Prostate gland (tissue), 2 donors: ENCODE measurements at regions of chr14 and their contacts with region 1.

Region 1: DNA sequence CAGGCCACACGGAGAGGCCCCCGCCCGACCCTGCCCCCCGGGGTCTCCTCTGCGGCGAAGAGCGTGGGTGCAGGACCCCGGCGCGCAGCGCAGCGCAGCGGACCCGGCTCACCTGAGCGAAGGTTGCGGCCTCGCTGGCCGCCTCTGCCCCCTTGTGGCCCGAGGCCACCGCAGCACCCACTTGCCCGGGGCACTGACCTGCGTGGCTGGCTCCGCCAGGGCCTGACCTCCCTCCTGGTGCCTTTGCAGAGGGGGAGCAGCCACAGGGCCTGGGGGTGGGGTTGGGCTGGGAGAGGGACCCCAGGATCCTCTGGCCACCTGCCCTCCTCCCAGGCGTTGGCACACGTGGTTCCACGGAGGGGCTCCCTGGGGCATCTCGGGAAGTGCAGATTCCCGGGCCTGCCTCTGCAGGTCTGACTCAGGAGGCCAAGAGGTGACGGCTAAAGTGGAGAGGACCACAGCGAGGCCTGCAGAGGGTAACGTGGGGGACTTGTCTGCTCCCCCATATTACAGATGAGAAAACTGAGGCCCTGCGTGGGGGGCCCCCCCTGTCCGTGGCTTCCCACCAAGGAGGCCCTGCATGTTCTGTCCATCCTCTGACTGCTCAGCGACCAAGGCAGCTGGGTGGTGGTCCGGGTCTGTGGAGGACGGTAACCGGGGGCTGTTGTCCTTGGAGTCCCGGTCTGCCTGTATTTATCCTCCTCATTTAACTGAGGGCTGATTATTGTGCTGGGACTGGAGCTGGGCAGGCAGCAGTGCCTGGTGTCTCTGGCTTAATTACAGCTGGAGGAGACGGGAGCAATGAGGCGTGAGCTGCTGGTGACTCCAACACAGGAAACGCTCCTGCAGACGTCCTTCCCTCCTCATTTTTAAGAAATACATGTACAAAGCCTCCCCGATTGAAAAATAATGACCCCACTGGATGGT is 67.9 kb upstream of the BEGAIN start:
- DNase-seq: no peak
- H3K4me3 ChIP-seq: no peak overlapping the region
- H3K27ac ChIP-seq: no peak overlapping the region
- H3K4me1 ChIP-seq: no peaks in the 10 kb centered on the region
- H3K27me3 ChIP-seq: no peaks in the 10 kb centered on the region
- CTCF ChIP-seq: peak; percentile 42 to 85 (median 58)
- POLR2A ChIP-seq: no peak

Region 2: DNA sequence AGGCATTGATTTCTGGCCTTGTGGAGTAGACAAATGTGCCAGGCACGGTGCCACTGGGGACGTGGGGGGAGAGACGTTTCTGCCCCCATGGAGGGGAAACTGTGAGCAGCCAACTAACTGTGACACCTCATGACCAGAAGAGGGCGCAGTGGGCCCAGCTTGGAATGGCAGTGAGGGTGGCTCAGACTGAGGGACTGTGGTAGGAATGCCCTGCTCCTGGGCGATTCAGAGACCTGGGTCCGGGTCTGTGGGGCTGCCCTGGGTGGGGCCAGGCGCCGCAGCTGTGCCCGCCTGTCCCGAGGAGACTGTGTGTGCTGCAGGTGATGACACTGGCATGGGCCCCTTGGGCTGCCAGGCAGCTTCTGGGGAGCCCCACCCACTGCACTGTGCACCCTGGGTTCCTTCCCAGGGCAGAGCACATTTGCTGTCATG is 271.3 kb before region 1 on chr14:
- intact Hi-C with region 1: loop called (anchors 5 kb)
- DNase-seq: peak; percentile 63
- H3K4me3 ChIP-seq: no peak overlapping the region
- H3K27ac ChIP-seq: no peak overlapping the region
- H3K4me1 ChIP-seq: peaks cover 3% of the 10 kb centered on the region
- H3K27me3 ChIP-seq: no peaks in the 10 kb centered on the region
- CTCF ChIP-seq: peak; percentile 66 to 83 (median 76)
- POLR2A ChIP-seq: no peak

Region 3: GRCh38 chr14:100524933-100525243 is 130.2 kb before region 1 on chr14:
- intact Hi-C with region 1: loop called (anchors 10 kb)
- DNase-seq: no peak
- H3K4me3 ChIP-seq: no peak overlapping the region
- H3K27ac ChIP-seq: no peak overlapping the region
- H3K4me1 ChIP-seq: no peaks in the 10 kb centered on the region
- H3K27me3 ChIP-seq: no peaks in the 10 kb centered on the region
- CTCF ChIP-seq: peak in 2 of 4 experiments; percentile 20 to 38
- POLR2A ChIP-seq: no peak